Activated B cell treated with CpG ODN at 0.5 μM for 24 hours (primary cell): ENCODE measurements at regions of chr1 and their contacts with region 1.

Region 1: GRCh38 chr1:155127105-155127964 is at the start of gene EFNA1:
- DNase-seq: peak; percentile 42
- ATAC-seq: peak; percentile 71
- H3K4me3 Mint-ChIP-seq: peak within 1 kb of the TSS; percentile 79
- H3K27ac Mint-ChIP-seq: no peak within 1 kb of the TSS
- H3K4me1 Mint-ChIP-seq: peaks cover 30% of the 10 kb centered on the region
- H3K27me3 Mint-ChIP-seq: peaks cover 42% of the 10 kb centered on the region
- CTCF ChIP-seq: no peak
- total RNA-seq, gene EFNA1: 0.29 TPM in 1 of 2 replicates, not detected in the other

Region 2: GRCh38 chr1:154831462-154831861 is 295.9 kb before region 1 on chr1:
- CTCF ChIA-PET with region 1: no interaction called
- POLR2A ChIA-PET with region 1: no interaction called
- intact Hi-C with region 1: no loop called
- DNase-seq: no peak
- ATAC-seq: no peak
- H3K4me3 Mint-ChIP-seq: no peak overlapping the region
- H3K27ac Mint-ChIP-seq: no peak overlapping the region
- H3K4me1 Mint-ChIP-seq: no peaks in the 10 kb centered on the region
- H3K27me3 Mint-ChIP-seq: no peaks in the 10 kb centered on the region
- CTCF ChIP-seq: no peak

Region 3: DNA sequence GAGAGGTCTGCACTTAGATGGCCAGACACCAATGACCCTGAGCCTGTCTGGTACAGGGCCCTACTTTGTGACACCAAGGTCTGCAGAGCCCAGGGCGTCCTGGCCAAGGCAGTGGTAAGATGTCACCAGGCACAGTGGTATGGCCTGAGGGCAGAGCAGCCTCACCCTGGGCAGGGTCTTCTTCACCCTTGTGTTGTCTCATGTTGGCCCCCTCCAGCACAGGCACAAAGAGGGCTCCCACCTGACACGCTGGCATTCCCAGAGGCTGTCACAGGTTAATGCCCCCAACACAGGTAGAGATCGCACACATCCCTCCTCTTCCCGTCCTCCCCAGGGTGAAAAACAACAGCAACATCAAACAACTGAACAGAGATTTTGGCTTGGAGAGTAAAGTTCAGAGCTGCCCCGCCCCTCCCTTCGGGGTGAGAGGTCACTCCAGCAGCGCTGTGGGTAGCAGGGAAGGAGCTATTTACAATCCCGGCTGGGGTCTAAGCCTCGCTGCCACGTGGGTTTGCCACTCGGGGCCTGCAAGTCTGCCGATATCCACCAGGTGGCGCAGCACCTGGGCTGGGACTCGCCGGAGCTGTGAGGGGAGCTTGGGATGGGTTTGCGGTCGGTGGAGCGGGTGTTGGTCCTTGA is 36.1 kb before region 1 on chr1:
- CTCF ChIA-PET with region 1: interaction called, 6 read pairs
- POLR2A ChIA-PET with region 1: interaction called, 7 read pairs
- intact Hi-C with region 1: loop called (anchors 5 kb)
- DNase-seq: peak; percentile 76
- ATAC-seq: peak; percentile 89
- H3K4me3 Mint-ChIP-seq: no peak overlapping the region
- H3K27ac Mint-ChIP-seq: no peak overlapping the region
- H3K4me1 Mint-ChIP-seq: peaks cover 12% of the 10 kb centered on the region
- H3K27me3 Mint-ChIP-seq: peaks cover 6% of the 10 kb centered on the region
- CTCF ChIP-seq: peak; percentile 48

Region 4: DNA sequence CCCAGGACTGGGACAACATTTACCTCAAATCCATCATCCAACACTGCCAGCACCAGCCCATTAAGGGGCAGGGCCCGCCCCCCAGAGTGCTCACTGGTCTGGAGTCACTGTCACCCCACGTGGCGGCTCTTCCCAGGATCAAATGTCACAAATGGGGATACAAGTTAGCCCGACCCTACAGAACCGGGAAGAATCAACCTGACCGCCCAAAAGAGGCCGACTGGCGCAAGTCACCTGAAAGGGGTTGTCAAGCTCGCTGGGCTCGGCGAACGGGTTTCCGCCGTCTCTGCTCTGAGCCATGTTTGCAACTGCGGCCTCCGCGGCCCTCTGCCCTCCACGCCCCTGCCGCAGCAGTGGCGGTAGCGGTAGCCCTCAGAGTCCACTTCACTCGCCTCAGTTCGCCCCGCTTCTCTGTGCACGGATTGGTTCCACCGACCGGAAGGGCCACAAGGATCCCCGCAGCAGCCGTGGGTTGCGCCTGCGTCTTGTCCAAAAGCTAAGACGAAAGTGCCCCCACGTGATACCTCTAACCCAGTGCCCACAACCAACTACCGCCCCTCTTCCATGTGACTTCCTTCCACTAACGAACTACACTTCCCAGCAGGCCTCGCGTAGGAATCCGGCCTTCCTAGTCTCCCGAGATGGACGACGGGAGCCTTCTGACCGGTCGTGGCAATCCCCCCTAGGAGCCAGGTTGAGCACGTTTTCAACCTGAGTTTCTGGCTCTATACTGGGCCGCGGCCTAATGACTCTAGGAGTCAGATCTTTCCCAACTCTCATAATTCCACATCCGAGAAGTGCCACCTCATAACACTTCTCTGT is 134.7 kb after region 1 on chr1 and contains the start of gene SCAMP3:
- CTCF ChIA-PET with region 1: no interaction called
- POLR2A ChIA-PET with region 1: no interaction called
- intact Hi-C with region 1: no loop called
- DNase-seq: peak; percentile 71
- ATAC-seq: peak; percentile 95
- H3K4me3 Mint-ChIP-seq: peak within 1 kb of the TSS; percentile 98
- H3K27ac Mint-ChIP-seq: peak within 1 kb of the TSS; percentile 92
- H3K4me1 Mint-ChIP-seq: peaks cover 33% of the 10 kb centered on the region
- H3K27me3 Mint-ChIP-seq: no peaks in the 10 kb centered on the region
- CTCF ChIP-seq: no peak
- total RNA-seq, gene SCAMP3: 71.8 and 78.6 TPM in 2 replicates